ENCODE measurements at regions of chr19 and their contacts with region 1.

Region 1: GRCh38 chr19:8261347-8262310 is 46.5 kb downstream of the CD320 start:
- DNase-seq: no peak
- H3K4me3 Mint-ChIP-seq: no peak overlapping the region
- H3K27ac Mint-ChIP-seq: no peak overlapping the region
- H3K4me1 Mint-ChIP-seq: no peaks in the 10 kb centered on the region
- H3K27me3 Mint-ChIP-seq: no peaks in the 10 kb centered on the region
- CTCF ChIP-seq: no peak

Region 2: GRCh38 chr19:8210421-8211101 is 51.1 kb before region 1 on chr19:
- CTCF ChIA-PET with region 1: no interaction called
- intact Hi-C with region 1: no loop called
- DNase-seq: no peak
- H3K4me3 Mint-ChIP-seq: peak overlapping the region; percentile 65
- H3K27ac Mint-ChIP-seq: no peak overlapping the region
- H3K4me1 Mint-ChIP-seq: peaks cover 21% of the 10 kb centered on the region
- H3K27me3 Mint-ChIP-seq: no peaks in the 10 kb centered on the region
- CTCF ChIP-seq: no peak

Region 3: GRCh38 chr19:8311461-8312376 is 50.1 kb after region 1 on chr19:
- CTCF ChIA-PET with region 1: no interaction called
- intact Hi-C with region 1: loop called (anchors 10 kb)
- DNase-seq: no peak
- H3K4me3 Mint-ChIP-seq: no peak overlapping the region
- H3K27ac Mint-ChIP-seq: no peak overlapping the region
- H3K4me1 Mint-ChIP-seq: peaks cover 15% of the 10 kb centered on the region
- H3K27me3 Mint-ChIP-seq: no peaks in the 10 kb centered on the region
- CTCF ChIP-seq: no peak

Measured in Calu3 (cell line).